Activated B cell treated with CpG ODN at 0.5 μM for 24 hours (primary cell): ENCODE measurements at regions of chr17 and their contacts with region 1.

Region 1: GRCh38 chr17:69235338-69235930 is 6.8 kb upstream of the ABCA10 start:
- DNase-seq: peak; percentile 42
- ATAC-seq: peak; percentile 95
- H3K4me3 Mint-ChIP-seq: no peak overlapping the region
- H3K27ac Mint-ChIP-seq: no peak overlapping the region
- H3K4me1 Mint-ChIP-seq: peaks cover 5% of the 10 kb centered on the region
- H3K27me3 Mint-ChIP-seq: no peaks in the 10 kb centered on the region
- CTCF ChIP-seq: peak; percentile 29

Region 2: GRCh38 chr17:68539548-68540467 is 695.6 kb before region 1 on chr17:
- CTCF ChIA-PET with region 1: no interaction called
- POLR2A ChIA-PET with region 1: no interaction called
- intact Hi-C with region 1: loop called (anchors 5 kb)
- DNase-seq: no peak
- ATAC-seq: peak; percentile 72
- H3K4me3 Mint-ChIP-seq: no peak overlapping the region
- H3K27ac Mint-ChIP-seq: peak overlapping the region; percentile 61
- H3K4me1 Mint-ChIP-seq: peaks cover 15% of the 10 kb centered on the region
- H3K27me3 Mint-ChIP-seq: no peaks in the 10 kb centered on the region
- CTCF ChIP-seq: no peak

Region 3: DNA sequence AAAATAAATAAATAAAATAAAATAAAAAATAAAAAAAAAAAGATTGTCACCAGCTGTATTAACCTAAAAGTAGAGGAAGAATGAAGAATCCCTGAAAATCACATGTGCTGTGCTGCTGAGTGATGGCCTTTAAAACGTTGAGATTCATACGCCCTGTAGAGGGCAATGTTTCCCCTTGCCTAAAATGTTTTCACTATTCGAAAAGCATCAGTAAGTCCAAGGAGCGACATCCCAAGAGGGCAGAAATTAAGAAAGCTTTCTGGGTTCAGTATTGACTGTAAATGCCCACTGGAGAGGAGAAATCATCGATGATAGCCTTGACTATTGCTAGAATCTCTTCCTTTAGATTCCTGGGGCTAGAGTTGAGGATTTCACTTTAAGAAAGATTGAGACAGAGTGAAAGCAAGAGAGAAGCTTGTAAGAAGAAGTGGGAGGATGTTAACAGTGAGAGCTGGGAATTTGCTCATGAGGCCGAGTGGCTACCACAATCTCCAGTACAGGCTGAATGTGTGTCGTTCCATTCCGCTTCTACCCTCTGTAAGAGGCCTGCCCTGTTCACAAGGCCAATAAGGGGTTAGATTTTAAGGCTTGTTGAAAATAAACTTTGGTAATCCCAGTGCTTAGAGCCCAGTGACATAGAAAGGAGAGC is 463.4 kb before region 1 on chr17:
- CTCF ChIA-PET with region 1: interaction called, 52 read pairs
- POLR2A ChIA-PET with region 1: no interaction called
- intact Hi-C with region 1: loop called (anchors 1 kb)
- DNase-seq: no peak
- ATAC-seq: peak; percentile 79
- H3K4me3 Mint-ChIP-seq: peak overlapping the region; percentile 70
- H3K27ac Mint-ChIP-seq: peak overlapping the region; percentile 69
- H3K4me1 Mint-ChIP-seq: peaks cover 20% of the 10 kb centered on the region
- H3K27me3 Mint-ChIP-seq: no peaks in the 10 kb centered on the region
- CTCF ChIP-seq: peak; percentile 17

Region 4: GRCh38 chr17:68777243-68777855 is 458.1 kb before region 1 on chr17:
- CTCF ChIA-PET with region 1: interaction called, 52 read pairs
- POLR2A ChIA-PET with region 1: no interaction called
- intact Hi-C with region 1: loop called (anchors 1 kb)
- DNase-seq: no peak
- ATAC-seq: no peak
- H3K4me3 Mint-ChIP-seq: no peak overlapping the region
- H3K27ac Mint-ChIP-seq: no peak overlapping the region
- H3K4me1 Mint-ChIP-seq: peaks cover 18% of the 10 kb centered on the region
- H3K27me3 Mint-ChIP-seq: no peaks in the 10 kb centered on the region
- CTCF ChIP-seq: peak; percentile 35

Region 5: GRCh38 chr17:68972119-68972704 is 263.2 kb before region 1 on chr17:
- CTCF ChIA-PET with region 1: no interaction called
- POLR2A ChIA-PET with region 1: no interaction called
- intact Hi-C with region 1: loop called (anchors 10 kb)
- DNase-seq: no peak
- ATAC-seq: no peak
- H3K4me3 Mint-ChIP-seq: no peak overlapping the region
- H3K27ac Mint-ChIP-seq: no peak overlapping the region
- H3K4me1 Mint-ChIP-seq: peaks cover 5% of the 10 kb centered on the region
- H3K27me3 Mint-ChIP-seq: peaks cover 3% of the 10 kb centered on the region
- CTCF ChIP-seq: no peak

Region 6: DNA sequence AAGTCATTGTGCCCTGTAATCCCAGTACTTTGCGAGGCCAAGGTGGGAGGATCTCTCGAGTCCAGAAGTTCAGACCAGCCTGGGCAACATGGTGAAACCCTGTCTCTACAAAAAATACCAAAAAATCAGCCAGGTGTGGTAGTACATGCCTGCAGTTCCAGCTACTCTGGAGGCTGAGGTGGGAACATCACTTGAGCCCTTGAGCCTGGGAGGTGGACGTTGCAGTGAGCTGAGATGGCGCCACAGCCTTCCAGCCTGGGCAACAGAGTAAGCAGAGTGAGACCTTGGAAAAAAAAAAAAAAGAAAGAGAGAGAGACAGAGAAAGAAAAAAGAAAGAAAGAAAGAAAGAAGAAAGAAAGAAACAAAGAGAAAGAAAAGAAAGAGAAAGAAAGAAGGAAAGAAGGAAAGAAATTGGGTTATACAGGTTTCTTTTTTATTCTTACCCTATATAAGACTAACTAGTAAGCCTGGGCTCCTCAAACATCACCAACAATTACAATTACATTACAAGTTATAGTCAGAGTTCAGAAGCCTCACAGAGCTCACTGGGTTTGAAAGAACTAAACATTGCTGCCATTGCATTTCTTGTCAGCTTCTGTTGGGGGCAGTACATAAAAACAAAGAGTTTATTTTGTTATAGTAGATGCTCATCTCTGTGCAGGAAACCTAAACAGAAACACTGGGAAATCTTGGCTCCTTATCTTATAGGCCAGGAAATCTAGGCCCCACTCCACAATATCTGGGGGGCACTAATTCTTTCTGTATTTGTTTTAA is 168.0 kb before region 1 on chr17:
- CTCF ChIA-PET with region 1: no interaction called
- POLR2A ChIA-PET with region 1: no interaction called
- intact Hi-C with region 1: loop called (anchors 5 kb)
- DNase-seq: no peak
- ATAC-seq: no peak
- H3K4me3 Mint-ChIP-seq: no peak overlapping the region
- H3K27ac Mint-ChIP-seq: no peak overlapping the region
- H3K4me1 Mint-ChIP-seq: peaks cover 37% of the 10 kb centered on the region
- H3K27me3 Mint-ChIP-seq: no peaks in the 10 kb centered on the region
- CTCF ChIP-seq: no peak

Region 7: GRCh38 chr17:69117855-69118784 is 117.3 kb before region 1 on chr17:
- CTCF ChIA-PET with region 1: no interaction called
- POLR2A ChIA-PET with region 1: no interaction called
- intact Hi-C with region 1: loop called (anchors 1 kb)
- DNase-seq: no peak
- ATAC-seq: peak; percentile 41
- H3K4me3 Mint-ChIP-seq: peak overlapping the region; percentile 42
- H3K27ac Mint-ChIP-seq: peak overlapping the region; percentile 79
- H3K4me1 Mint-ChIP-seq: peaks cover 49% of the 10 kb centered on the region
- H3K27me3 Mint-ChIP-seq: no peaks in the 10 kb centered on the region
- CTCF ChIP-seq: no peak